ENCODE measurements at regions of chr6 and their contacts with region 1.

Region 1: DNA sequence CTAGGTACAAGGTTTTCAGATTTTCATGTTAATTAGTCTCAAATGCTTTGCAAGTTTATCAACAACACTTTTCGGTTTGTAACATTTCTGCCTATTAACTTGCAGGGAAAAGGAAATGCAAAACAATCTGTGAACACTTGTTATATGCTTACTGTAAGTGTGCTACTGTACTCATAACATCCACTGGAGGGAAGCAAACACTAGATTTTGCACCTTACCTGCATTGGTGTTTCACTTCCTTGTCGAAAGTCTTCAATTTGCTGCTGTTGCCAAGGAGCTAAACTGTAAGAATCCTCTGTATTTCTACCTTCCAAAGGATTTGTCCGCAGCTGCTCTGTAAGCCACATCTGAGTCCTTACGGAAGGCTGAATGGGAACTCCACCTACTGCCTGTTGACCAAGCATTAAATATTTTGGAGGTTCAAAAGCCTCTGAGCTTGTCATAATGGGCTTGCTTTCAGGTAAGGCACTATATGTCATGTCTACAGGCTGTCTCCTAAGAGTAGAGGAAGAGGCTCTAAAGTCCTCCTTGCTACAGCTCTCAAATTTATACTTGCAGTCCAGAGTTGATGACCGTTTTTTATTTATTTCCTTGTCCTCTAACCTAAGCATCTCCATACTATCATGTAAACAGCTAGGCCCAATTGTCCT is 17.3 kb downstream of the PLN start:
- DNase-seq: peak; percentile 3 to 72
- H3K4me3 ChIP-seq: no peak overlapping the region
- H3K27ac ChIP-seq: no peak overlapping the region
- H3K4me1 ChIP-seq: no peaks in the 10 kb centered on the region
- H3K27me3 ChIP-seq: no peaks in the 10 kb centered on the region
- CTCF ChIP-seq: peak; percentile 82

Region 2: DNA sequence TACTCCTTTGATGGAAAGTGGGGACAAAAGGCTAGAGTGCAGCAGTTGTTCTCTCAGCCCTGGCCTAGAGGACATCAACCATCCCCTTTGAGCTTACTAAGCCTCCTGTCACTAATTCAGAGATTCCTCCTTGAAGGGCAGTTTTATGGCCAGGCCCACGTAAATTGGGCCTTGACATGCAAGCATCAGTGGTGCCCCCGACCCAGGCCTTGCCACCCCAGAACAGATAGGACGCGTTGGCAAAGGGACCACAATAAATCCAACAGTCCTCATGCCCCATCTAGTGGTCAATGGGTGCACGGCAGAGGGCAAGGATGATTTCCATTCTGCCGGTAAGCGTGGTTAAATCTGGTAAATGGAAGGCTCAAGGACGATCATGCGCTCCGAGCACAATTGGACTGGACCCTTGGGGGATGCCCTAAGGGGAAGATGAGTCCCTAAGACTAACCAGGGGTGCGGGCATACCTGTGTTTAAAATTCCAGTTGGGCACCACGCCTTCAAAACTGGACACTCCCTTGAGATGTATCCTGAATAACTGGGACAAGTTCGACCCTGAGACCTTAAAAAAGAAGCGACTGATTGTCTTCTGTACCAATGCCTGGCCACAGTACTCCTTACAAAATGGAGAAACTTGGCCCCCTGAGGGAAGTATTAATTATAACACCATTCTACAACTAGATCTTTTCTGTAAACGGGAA is 53.4 kb after region 1 on chr6:
- CTCF ChIA-PET with region 1: no interaction called
- POLR2A ChIA-PET with region 1: no interaction called
- intact Hi-C with region 1: loop called (anchors 2 kb)
- DNase-seq: peak in 1 of 2 experiments; percentile 21
- H3K4me3 ChIP-seq: no peak overlapping the region
- H3K27ac ChIP-seq: no peak overlapping the region
- H3K4me1 ChIP-seq: no peaks in the 10 kb centered on the region
- H3K27me3 ChIP-seq: no peaks in the 10 kb centered on the region
- CTCF ChIP-seq: peak; percentile 91

Region 3: DNA sequence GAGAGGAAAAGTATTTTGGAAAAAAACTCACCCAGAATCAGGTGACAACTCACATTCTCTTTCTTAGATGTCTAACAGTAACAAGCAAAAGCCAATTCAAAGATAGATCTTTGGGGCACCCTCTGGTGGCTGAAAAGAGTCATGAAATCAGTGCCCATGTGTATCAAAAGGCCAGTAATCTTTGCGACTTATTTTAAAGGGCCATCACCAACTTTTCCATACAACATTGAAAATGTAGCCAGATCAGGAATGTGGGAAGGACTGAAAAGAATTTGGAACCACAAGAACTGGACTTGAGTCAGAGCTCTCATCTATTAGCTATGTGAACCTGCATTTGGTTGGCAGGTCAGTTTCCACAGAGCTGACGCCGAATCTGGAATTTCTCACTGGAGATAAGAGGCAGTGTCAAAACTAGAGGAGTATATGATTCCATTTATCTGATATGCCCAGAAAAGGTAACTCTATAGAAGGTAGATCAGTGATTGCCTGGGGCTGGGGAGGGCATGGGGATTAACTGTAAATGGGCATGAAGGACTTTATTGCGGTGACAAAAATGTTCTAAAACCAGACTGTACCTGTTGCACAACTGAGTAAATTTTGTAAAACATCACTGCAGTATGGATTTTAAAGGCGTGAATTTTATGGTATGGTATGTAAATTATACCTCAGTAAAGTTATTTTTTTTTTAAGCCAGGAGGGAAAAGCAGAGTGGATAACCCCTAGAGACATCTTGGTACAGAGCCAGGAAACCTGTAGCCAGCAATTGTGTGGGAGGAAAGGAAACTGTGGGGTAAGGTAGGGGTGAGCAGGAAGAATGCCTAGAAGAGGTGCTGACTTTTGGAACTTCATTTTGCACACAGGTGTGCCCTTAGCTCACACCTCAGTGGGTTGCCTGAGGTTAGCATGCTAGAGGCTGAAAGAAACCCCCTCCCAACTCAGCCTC is 211.4 kb after region 1 on chr6:
- CTCF ChIA-PET with region 1: no interaction called
- POLR2A ChIA-PET with region 1: no interaction called
- intact Hi-C with region 1: loop called (anchors 1 kb)
- DNase-seq: peak; percentile 51 to 97
- H3K4me3 ChIP-seq: peak overlapping the region; percentile 13; the same call in 1 of the 2 replicates
- H3K27ac ChIP-seq: peak overlapping the region; percentile 44
- H3K4me1 ChIP-seq: peaks cover 20% of the 10 kb centered on the region
- H3K27me3 ChIP-seq: no peaks in the 10 kb centered on the region
- CTCF ChIP-seq: peak; percentile 91

Region 4: DNA sequence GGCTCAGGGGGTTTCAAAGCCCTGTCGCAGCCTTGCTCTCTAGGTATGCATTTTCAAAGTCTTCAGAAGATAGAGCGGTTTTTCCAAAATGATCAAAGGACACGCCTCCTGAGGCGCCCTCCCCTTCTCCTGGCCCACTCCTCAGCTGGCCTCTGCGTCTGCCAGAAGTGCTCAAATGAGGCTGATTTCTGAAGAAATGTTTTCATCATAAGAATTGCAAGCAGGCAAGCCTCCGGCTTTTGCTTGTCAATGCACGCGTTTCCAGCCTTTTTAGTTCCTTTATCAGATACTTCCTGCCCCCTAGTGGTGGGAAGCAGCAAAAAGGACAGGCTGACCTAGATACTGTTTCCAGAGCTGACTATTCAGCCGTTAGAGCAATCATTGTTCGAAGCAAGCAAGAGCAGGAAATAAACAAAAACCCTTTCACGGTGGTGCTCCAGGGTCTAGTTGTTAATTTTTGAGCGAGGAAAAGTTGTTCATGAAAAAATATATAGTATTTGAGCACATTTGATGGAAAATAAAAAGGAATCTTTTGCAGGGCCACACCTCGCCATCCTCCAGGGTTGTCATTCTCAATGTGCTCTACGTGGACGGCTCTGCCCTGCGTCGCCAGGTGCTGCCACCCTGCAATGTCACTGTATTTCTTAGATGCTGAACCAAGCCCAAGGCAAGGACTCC is 235.1 kb after region 1 on chr6:
- CTCF ChIA-PET with region 1: no interaction called
- POLR2A ChIA-PET with region 1: no interaction called
- intact Hi-C with region 1: loop called (anchors 1 kb)
- DNase-seq: peak; percentile 60 to 75
- H3K4me3 ChIP-seq: no peak overlapping the region
- H3K27ac ChIP-seq: no peak overlapping the region
- H3K4me1 ChIP-seq: no peaks in the 10 kb centered on the region
- H3K27me3 ChIP-seq: no peaks in the 10 kb centered on the region
- CTCF ChIP-seq: peak; percentile 99

Region 5: GRCh38 chr6:118968416-118968815 is 403.0 kb after region 1 on chr6:
- CTCF ChIA-PET with region 1: no interaction called
- POLR2A ChIA-PET with region 1: no interaction called
- intact Hi-C with region 1: loop called (anchors 10 kb)
- DNase-seq: no peak
- H3K4me3 ChIP-seq: no peak overlapping the region
- H3K27ac ChIP-seq: no peak overlapping the region
- H3K4me1 ChIP-seq: no peaks in the 10 kb centered on the region
- H3K27me3 ChIP-seq: no peaks in the 10 kb centered on the region
- CTCF ChIP-seq: peak; percentile 64

Region 6: DNA sequence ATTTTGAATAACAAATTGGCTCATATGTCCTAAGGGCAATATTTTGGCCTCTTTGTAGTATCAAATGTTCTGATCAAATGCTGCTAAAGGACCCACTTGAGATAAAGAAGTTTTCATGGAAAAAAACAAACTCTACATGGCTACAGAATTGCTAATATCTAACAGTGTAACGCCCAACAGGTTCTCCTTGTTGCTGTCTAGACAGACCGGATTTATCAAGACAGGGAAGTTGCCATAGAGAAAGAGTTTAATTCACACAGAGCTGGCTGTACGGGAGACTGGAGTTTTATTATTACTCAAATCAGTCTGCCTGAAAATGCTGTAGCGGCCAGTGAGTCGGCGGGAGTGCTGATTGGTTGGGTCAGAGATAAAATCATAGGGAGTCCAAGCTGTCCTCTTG is 803.5 kb after region 1 on chr6:
- CTCF ChIA-PET with region 1: no interaction called
- POLR2A ChIA-PET with region 1: no interaction called
- intact Hi-C with region 1: no loop called
- DNase-seq: no peak
- H3K4me3 ChIP-seq: no peak overlapping the region
- H3K27ac ChIP-seq: no peak overlapping the region
- H3K4me1 ChIP-seq: no peaks in the 10 kb centered on the region
- H3K27me3 ChIP-seq: no peaks in the 10 kb centered on the region
- CTCF ChIP-seq: no peak

Measured in PC-9 (cell line).